Posterior vena cava (tissue), 2 donors: ENCODE measurements at regions of chr16 and their contacts with region 1.

Region 1: GRCh38 chr16:49866595-49867071 is 10.7 kb upstream of the ZNF423 start:
- DNase-seq: no peak

Region 2: GRCh38 chr16:49419006-49419405 is 447.6 kb before region 1 on chr16:
- intact Hi-C with region 1: loop called in 1 of 2 experiments (anchors 10 kb)
- DNase-seq: no peak

Region 3: GRCh38 chr16:49838441-49839016 is 28.1 kb before region 1 on chr16:
- intact Hi-C with region 1: no loop called
- DNase-seq: no peak